ENCODE measurements at regions of chr17 and their contacts with region 1.

Region 1: DNA sequence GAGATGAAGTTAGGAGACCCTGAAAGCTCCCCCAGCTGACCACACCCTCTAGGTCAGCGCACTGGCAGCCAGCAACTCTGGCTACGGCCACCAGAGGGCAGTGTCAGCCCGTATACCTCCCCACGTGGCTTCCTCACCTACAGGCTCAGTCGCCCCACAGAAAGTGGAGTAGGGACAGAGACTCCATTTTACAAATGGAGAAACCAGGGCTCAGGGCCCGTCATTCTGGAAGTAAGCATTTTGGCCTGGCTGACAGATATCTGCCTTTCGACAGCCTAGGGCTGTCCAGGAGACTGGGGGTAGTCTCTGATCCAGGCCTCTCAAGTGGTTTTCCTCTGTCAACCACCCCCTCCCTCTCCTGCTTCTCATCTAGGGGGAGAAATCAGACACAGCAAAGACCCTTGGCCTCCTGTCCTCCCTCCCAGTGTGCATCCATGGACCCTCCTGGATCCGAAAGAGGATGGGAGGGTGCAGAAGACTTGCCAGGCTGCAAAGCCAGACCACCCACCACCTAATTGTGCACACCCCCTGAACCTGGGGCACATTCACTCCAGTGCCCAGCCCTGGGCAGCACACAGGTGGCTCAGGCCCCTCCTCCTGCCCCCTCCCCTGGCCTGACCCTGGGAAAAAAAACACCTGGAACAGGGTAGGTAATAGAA is 3.8 kb upstream of the HAP1 start:
- DNase-seq: peak; percentile 14
- H3K4me3 ChIP-seq: no peak overlapping the region
- H3K27me3 ChIP-seq: peaks cover 25% of the 10 kb centered on the region
- CTCF ChIP-seq: peak; percentile 95

Region 2: GRCh38 chr17:41559548-41559947 is 178.7 kb before region 1 on chr17:
- CTCF ChIA-PET with region 1: no interaction called
- POLR2A ChIA-PET with region 1: no interaction called
- DNase-seq: no peak
- H3K4me3 ChIP-seq: no peak overlapping the region
- H3K27me3 ChIP-seq: peaks cover 7% of the 10 kb centered on the region
- CTCF ChIP-seq: no peak

Region 3: DNA sequence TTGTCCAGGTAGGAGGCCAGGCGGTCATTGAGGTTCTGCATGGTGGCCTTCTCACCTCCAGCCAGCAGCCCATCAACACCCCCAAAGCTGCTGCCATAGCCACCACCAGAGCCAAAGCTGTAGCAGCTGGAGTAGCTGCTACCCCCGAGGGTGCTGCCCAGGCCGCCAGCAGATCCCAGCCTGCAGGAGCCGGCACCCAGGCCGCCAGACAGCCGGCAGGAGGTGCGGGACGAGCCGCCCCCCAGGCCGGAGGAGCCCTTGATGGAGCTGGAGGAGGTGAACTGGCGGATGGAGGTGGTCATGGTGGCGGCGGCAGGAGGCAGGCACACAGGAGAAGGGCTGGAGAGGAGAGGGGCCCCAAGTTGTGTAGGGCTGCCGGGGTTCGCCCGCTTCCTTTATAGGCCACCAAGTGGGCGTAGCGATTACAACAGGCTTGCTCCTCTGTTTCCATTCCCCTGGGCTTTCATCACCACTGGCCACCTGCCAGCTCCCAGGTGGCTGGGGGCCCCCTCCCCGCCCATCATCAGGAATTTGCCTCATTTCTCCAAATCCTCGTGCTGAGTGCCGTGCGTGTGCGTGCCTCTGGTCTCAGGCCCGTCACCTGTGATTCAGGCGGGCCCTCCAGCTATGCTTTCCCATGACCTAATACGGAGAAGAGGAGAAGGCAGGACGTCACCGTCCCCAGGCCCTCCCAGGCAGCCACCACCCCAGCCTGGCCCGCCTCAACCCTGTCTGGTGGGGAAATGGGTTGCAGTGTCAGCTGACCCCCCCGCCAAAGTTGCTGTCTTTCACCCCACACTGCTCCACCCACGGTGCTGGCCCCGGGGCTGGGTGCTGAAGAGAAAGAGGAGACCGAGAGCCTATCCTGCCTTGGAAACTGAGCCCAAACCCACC is 113.8 kb before region 1 on chr17 and contains the start of gene KRT17:
- CTCF ChIA-PET with region 1: no interaction called
- POLR2A ChIA-PET with region 1: no interaction called
- DNase-seq: no peak
- H3K4me3 ChIP-seq: no peak within 1 kb of the TSS
- H3K27me3 ChIP-seq: no peaks in the 10 kb centered on the region
- CTCF ChIP-seq: no peak
- polyA plus RNA-seq, gene KRT17: 25.2 and 34.7 TPM in 2 replicates

Region 4: DNA sequence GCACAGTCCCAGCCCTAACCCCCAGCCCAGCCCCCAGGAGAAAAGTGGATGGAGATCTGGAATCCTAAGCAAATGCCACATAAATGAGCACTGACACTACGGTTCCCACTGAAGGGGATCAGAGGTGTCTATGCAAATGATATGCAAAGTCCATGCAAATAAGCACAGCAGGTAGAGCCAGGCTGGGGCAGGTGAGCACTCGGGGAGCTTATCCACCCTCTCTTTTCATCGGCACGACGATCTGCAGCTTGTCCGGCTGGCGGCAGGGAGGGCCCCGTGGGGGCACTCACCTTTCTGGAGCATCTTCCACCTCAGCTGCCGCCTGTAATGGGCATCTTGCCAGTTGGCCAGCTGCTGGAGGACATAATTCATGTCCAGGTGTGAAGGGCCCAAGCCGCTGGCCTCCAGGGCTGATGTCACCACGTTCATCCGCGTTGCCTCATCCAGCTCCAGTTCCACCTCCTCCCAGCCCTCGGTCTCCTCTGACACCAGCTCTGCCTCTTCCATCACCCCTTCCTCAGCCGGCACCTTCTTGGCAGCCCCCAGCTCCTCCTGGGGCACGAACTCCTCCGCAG is 13.6 kb before region 1 on chr17:
- CTCF ChIA-PET with region 1: interaction called, 12 read pairs
- POLR2A ChIA-PET with region 1: no interaction called
- DNase-seq: no peak
- H3K4me3 ChIP-seq: no peak overlapping the region
- H3K27me3 ChIP-seq: peaks cover 4% of the 10 kb centered on the region; the same call in 1 of the 2 replicates
- CTCF ChIP-seq: no peak

Region 5: DNA sequence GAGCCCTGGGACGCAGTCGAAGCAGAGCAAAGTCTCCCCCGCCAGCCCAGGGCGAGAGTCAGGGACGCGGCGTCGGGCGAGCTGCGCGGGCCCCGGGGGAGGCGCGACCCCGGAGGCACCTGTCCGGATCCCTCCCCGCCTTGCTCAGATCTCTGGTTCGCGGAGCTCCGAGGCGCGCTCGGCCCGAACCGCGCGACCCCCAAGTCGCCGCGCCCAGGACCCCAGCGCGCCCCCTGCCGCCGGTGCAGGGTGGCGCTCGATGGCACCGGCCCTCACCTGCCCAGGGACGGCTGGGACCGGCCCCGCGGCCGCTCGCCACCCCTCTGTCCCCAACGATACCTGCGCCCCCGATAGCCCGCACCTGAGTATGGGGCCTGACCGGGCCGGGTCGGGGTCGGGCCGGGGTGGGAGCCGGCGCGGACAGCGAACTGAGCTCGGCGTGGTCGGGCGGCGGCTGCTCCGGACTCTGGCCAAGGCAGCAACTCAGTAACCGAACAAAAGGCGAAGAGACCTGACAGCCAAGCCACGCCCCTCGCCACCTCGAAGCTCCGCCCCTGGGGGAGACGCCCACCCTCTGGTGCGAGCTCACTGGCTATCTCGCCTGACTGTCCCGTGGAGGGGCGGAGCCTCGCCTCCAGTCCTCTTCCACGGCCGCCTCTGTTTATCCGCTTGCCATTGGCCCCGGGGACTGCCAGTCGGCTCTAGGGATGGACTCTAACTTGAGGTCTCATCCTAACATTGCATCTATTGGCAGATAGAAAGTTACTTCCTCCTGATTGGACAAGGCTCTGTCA is 48.2 kb after region 1 on chr17 and contains the start of gene JUP:
- CTCF ChIA-PET with region 1: interaction called, 19 read pairs
- POLR2A ChIA-PET with region 1: no interaction called
- DNase-seq: peak; percentile 98
- H3K4me3 ChIP-seq: peak within 1 kb of the TSS; percentile 73
- H3K27me3 ChIP-seq: no peaks in the 10 kb centered on the region; the same call in 1 of the 2 replicates
- CTCF ChIP-seq: no peak
- polyA plus RNA-seq, gene JUP: 7.3 and 9.4 TPM in 2 replicates

Region 6: DNA sequence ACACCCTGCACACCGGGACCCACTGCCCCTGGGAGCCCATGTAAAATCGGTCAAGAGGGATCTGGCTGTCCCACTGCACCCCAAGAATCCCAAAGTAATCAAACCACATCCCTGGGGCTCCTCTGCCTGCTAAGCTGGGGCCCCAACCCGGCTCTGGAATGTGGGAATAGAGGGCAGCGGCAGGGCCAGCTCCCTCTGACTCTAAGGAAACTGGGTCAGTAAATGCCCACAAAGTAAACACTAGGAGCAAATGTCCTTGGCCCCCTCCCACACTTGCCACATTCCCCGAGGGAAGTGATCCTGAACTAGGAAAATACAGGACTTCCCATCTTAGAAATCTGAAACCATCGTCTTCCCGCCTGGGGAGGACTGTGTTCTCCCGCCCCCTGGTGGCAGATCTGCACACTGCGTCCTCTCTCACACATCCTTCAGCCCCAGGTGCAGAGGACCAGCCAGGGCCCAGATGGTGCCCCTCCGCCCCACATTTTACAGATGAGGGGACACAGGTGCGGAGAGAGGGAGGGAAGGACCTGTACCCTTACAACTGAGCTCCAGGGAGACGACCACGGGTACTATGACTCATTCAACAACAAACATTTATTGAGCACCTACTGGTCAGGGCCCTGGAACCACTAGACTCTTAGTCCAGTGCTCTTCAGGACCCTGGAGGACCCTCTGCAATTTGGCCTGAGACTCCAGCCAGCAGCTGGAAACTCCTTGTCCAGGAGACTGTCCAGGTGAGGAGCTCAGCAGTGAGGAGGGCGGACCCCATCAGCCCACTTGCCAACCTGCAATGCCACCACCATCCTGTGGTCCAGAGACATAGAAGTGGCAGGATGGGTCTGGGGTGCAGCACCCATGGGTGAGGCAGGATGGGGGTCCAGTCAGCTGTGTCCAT is 63.4 kb after region 1 on chr17:
- CTCF ChIA-PET with region 1: interaction called, 125 read pairs
- POLR2A ChIA-PET with region 1: interaction called, 3 read pairs
- DNase-seq: no peak
- H3K4me3 ChIP-seq: no peak overlapping the region
- H3K27me3 ChIP-seq: no peaks in the 10 kb centered on the region
- CTCF ChIP-seq: peak; percentile 98

Region 7: GRCh38 chr17:41811549-41812380 is 73.6 kb after region 1 on chr17 and contains the start of gene P3H4:
- CTCF ChIA-PET with region 1: interaction called, 11 read pairs
- POLR2A ChIA-PET with region 1: no interaction called
- DNase-seq: no peak
- H3K4me3 ChIP-seq: peak within 1 kb of the TSS; percentile 88
- H3K27me3 ChIP-seq: no peaks in the 10 kb centered on the region
- CTCF ChIP-seq: peak; percentile 69
- polyA plus RNA-seq, gene P3H4: 64.4 and 82.8 TPM in 2 replicates

Measured in BJ (cell line).